PC-9 (cell line): ENCODE measurements at regions of chr15 and their contacts with region 1.

Region 1: DNA sequence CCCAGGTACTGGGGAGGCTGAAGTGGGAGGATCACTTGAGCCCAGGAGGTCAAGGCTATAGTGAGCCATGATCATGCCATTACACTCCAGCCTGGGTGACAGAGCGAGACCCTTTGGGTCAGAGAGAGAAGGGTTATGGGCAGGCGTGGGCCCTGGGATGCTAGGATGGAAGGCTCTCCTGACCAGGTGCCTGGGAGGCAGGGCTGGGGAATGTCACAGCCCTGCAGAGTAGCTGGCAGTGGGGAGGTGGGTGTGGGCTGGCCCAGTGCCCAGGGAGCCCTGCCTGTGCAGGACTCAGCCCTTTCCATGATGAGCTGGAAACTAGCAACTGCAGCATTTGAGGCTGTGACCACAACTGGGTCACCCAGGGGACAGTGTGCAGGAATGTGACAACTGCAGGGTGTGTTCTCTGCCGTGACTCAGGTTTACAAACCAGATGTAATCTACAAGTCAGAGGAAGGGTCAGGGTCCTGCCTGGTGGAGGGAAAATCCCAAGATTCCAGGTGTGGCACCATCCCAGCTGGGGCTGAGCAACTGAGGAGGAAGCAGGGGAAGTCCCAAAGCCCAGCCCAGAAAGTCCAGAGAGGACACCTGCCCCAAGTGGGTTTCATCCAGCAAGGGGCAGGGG is 45.4 kb downstream of the SLC28A1 start:
- DNase-seq: peak; percentile 97 to 99
- H3K4me3 ChIP-seq: no peak overlapping the region
- H3K27ac ChIP-seq: peak overlapping the region; percentile 80
- H3K4me1 ChIP-seq: peaks cover 55% of the 10 kb centered on the region
- H3K27me3 ChIP-seq: no peaks in the 10 kb centered on the region
- CTCF ChIP-seq: no peak

Region 2: DNA sequence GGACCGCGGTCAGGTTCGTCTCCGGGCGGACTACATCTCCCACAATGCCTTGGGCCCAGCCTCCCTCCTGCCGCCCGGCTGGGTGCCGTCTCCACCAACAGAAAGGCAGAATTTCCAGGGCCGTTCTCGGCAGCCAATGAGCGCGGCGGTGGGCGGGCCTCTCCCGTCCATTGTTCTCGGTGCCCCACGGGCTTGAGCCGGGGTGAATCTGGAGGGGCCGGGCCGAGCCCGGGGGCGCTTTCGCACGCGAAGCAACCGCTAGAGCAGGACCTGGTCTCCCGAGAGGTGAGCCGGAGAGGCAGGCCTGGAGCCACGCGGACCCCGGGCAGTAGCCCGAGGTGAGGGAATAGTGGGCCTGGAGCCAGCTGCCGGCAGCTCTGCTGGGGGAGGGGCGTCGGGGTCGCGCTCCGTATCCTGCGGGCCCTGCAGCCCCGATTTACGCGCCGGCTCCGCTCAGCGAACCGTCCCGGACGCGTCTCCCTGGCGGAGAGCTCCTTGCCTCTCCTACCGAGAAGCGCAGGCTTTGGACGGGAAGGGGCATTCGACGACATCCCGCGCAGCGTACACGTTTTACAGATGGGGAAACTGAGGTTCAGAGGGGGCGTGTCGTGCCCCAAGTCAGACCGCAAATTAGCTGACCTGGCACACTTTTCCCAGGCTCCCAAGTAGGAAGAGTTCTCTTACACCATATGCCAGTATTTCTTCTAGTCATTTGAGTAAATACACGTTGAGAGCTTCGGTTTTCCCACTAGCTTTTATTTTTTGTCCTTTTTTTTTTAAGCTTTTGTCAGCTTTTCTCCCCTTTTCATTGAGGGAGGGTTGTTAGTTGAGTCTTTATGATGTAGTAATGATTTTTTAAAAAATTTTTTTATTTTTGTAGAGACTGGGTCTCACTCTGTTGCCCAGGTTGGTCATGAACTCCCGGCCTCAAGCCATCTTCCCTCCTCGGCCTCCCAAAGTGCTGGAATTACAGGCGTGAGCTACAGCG is 328.7 kb before region 1 on chr15 and contains the start of gene ZSCAN2:
- CTCF ChIA-PET with region 1: no interaction called
- POLR2A ChIA-PET with region 1: no interaction called
- intact Hi-C with region 1: loop called (anchors 5 kb)
- DNase-seq: peak; percentile 87 to 94
- H3K4me3 ChIP-seq: peak within 1 kb of the TSS; percentile 88
- H3K27ac ChIP-seq: peak within 1 kb of the TSS; percentile 24; the same call in 1 of the 2 replicates
- H3K4me1 ChIP-seq: peaks cover 6% of the 10 kb centered on the region
- H3K27me3 ChIP-seq: no peaks in the 10 kb centered on the region
- CTCF ChIP-seq: no peak
- total RNA-seq, gene ZSCAN2: 9.7 and 11.3 TPM in 2 replicates

Region 3: GRCh38 chr15:84748274-84749110 is 181.4 kb before region 1 on chr15 and contains the start of gene ZNF592:
- CTCF ChIA-PET with region 1: no interaction called
- POLR2A ChIA-PET with region 1: interaction called, 4 read pairs
- intact Hi-C with region 1: loop called (anchors 1 kb)
- DNase-seq: peak in 1 of 2 experiments; percentile 82
- H3K4me3 ChIP-seq: peak within 1 kb of the TSS; percentile 91
- H3K27ac ChIP-seq: peak within 1 kb of the TSS; percentile 79
- H3K4me1 ChIP-seq: peaks cover 39% of the 10 kb centered on the region
- H3K27me3 ChIP-seq: no peaks in the 10 kb centered on the region
- CTCF ChIP-seq: no peak; the same call in 1 of the 2 replicates
- total RNA-seq, gene ZNF592: 20.8 and 27.5 TPM in 2 replicates

Region 4: GRCh38 chr15:84844964-84845363 is 84.9 kb before region 1 on chr15:
- CTCF ChIA-PET with region 1: interaction called, 7 read pairs
- POLR2A ChIA-PET with region 1: no interaction called
- intact Hi-C with region 1: loop called (anchors 1 kb)
- DNase-seq: peak in 1 of 2 experiments; percentile 5
- H3K4me3 ChIP-seq: no peak overlapping the region
- H3K27ac ChIP-seq: 0 out of 2 replicates have a peak overlapping the region, but pooled peaks have one; percentile 25
- H3K4me1 ChIP-seq: peaks cover 33% of the 10 kb centered on the region
- H3K27me3 ChIP-seq: no peaks in the 10 kb centered on the region
- CTCF ChIP-seq: no peak

Region 5: DNA sequence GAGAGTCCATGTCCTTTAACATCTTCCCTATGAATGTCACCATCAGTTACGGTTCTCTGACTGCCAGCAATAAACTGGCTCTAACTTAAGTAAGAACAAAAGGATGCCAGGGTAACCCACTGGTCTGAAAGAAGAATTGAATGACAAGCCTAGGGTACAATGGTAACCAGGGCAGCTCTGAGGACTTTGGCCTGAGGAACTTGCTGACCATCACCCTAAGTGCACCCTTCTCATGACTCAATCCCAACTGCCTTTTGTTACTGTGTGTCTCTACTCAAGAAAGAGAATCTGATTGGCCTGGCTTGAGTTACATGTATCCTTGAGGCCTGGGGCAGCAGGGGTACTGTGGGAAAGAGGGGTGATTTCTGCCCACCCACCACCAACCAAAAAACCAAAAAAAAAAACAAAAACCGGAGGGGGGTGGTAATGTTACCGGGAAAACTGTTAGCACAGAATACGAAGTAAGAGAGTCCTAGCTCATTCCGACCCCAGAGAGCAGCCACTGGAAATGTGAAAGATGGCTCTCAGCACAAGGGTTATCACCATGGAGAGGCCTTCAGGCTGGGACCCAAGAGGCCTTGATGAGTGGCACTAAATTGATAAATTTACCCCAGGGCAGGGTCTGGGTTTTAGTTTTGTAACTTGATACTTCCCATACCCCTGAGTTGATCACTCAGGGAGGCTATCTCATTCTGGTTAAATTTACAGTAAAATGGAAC is 54.7 kb before region 1 on chr15:
- CTCF ChIA-PET with region 1: interaction called, 12 read pairs
- POLR2A ChIA-PET with region 1: no interaction called
- intact Hi-C with region 1: loop called (anchors 5 kb)
- DNase-seq: no peak
- H3K4me3 ChIP-seq: no peak overlapping the region
- H3K27ac ChIP-seq: no peak overlapping the region
- H3K4me1 ChIP-seq: peaks cover 21% of the 10 kb centered on the region
- H3K27me3 ChIP-seq: no peaks in the 10 kb centered on the region
- CTCF ChIP-seq: no peak

Region 6: GRCh38 chr15:84961114-84961452 is 31.2 kb after region 1 on chr15:
- CTCF ChIA-PET with region 1: no interaction called
- POLR2A ChIA-PET with region 1: no interaction called
- intact Hi-C with region 1: no loop called
- DNase-seq: no peak
- H3K4me3 ChIP-seq: no peak overlapping the region
- H3K27ac ChIP-seq: no peak overlapping the region
- H3K4me1 ChIP-seq: peaks cover 43% of the 10 kb centered on the region
- H3K27me3 ChIP-seq: no peaks in the 10 kb centered on the region
- CTCF ChIP-seq: no peak

Region 7: GRCh38 chr15:84981054-84981710 is 51.3 kb after region 1 on chr15:
- CTCF ChIA-PET with region 1: no interaction called
- POLR2A ChIA-PET with region 1: interaction called, 9 read pairs
- intact Hi-C with region 1: loop called (anchors 1 kb)
- DNase-seq: peak; percentile 87 to 97
- H3K4me3 ChIP-seq: peak overlapping the region; percentile 69
- H3K27ac ChIP-seq: peak overlapping the region; percentile 63
- H3K4me1 ChIP-seq: peaks cover 29% of the 10 kb centered on the region
- H3K27me3 ChIP-seq: no peaks in the 10 kb centered on the region
- CTCF ChIP-seq: no peak; the same call in 1 of the 2 replicates